A549 (cell line): ENCODE measurements at regions of chr4 and their contacts with region 1.

Region 1: DNA sequence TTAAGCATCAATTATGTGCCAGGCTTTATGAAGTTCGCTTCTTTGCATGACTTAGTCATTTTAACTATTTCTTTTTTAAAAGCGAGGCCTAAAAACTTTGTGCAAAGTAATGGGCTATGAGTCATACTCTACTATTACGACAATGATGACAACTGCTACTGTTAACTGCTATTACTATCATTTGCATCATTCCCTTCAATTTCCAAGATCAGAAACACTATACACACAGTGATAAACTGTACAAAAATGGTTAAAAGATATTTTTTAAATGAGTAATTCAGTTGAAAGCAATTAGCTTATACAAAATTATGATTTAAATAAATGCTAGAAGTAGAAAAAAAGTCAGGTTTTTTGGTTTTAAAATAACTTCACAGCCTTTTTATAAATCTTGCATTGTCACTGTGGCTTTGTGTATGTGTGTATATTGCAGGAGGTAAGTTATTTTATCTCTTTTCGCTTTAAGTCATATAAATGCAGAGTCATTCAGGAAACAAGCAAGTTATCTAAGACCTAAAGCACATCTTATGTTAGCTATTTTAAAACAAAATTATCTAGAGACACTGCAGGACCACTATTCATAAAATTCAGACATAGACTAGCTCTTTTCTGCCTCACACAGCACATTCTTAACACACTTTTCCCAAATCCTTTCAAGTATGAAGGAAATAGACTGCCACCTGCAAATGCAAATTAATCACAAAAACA is 18.5 kb upstream of the CXCL3 start:
- DNase-seq: peak; percentile 26 to 71
- ATAC-seq: peak; percentile 78 to 92
- H3K4me3 ChIP-seq: no peak overlapping the region
- H3K27ac ChIP-seq: peak overlapping the region; percentile 85 to 87
- H3K4me1 ChIP-seq: peaks cover 29% of the 10 kb centered on the region
- CTCF ChIP-seq: no peak
- EP300 ChIP-seq: peak; percentile 74 to 76; a peak in 3 of 5 replicates
- POLR2A ChIP-seq: no peak
- RAD21 ChIP-seq: no peak

Region 2: GRCh38 chr4:73964862-73965611 is 92.0 kb before region 1 on chr4:
- CTCF ChIA-PET with region 1: no interaction called
- POLR2A ChIA-PET with region 1: no interaction called
- DNase-seq: peak in 1 of 2 experiments; percentile 7
- ATAC-seq: peak in 1 of 2 experiments; percentile 36; a peak in 2 of 6 replicates
- H3K4me3 ChIP-seq: no peak overlapping the region
- H3K27ac ChIP-seq: no peak overlapping the region
- H3K4me1 ChIP-seq: no peaks in the 10 kb centered on the region
- CTCF ChIP-seq: no peak
- EP300 ChIP-seq: no peak
- POLR2A ChIP-seq: no peak
- RAD21 ChIP-seq: peak in 1 of 2 experiments; percentile 15; a peak in 1 of 5 replicates

Region 3: GRCh38 chr4:74038161-74039064 is 18.6 kb before region 1 on chr4 and contains the start of gene CXCL3:
- CTCF ChIA-PET with region 1: interaction called, 17 read pairs
- POLR2A ChIA-PET with region 1: interaction called, 7 read pairs
- DNase-seq: peak; percentile 46 to 72
- ATAC-seq: peak; percentile 93 to 95
- H3K4me3 ChIP-seq: peak within 1 kb of the TSS; percentile 92
- H3K27ac ChIP-seq: peak within 1 kb of the TSS; percentile 95
- H3K4me1 ChIP-seq: peaks cover 43% of the 10 kb centered on the region
- CTCF ChIP-seq: peak; percentile 50; the same call in 2 of the 3 replicates
- EP300 ChIP-seq: no peak
- POLR2A ChIP-seq: no peak; the same call in 1 of the 2 replicates
- RAD21 ChIP-seq: peak in 1 of 2 experiments; percentile 63; a peak in 3 of 5 replicates
- polyA plus RNA-seq, gene CXCL3: 14.9 and 17.9 TPM in 2 replicates